ENCODE measurements at regions of chrX and their contacts with region 1.

Region 1: GRCh38 chrX:73577368-73577767 is 14.4 kb downstream of the CHIC1 start:
- DNase-seq: no peak
- ATAC-seq: no peak
- H3K4me3 ChIP-seq: no peak overlapping the region
- H3K4me3 Mint-ChIP-seq: no peak overlapping the region
- H3K27ac ChIP-seq: no peak overlapping the region
- H3K27ac Mint-ChIP-seq: no peak overlapping the region
- H3K4me1 ChIP-seq: no peaks in the 10 kb centered on the region
- H3K4me1 Mint-ChIP-seq: peaks cover 48% of the 10 kb centered on the region
- H3K27me3 ChIP-seq: no peaks in the 10 kb centered on the region
- H3K27me3 Mint-ChIP-seq: no peaks in the 10 kb centered on the region
- CTCF ChIP-seq: no peak

Region 2: GRCh38 chrX:73214426-73215094 is 362.8 kb before region 1 on chrX and contains the start of gene NAP1L2:
- CTCF ChIA-PET with region 1: no interaction called
- POLR2A ChIA-PET with region 1: no interaction called
- intact Hi-C with region 1: loop called in 1 of 2 experiments (anchors 10 kb)
- DNase-seq: peak in 8 of 9 experiments; percentile 6 to 81 (median 42)
- ATAC-seq: peak; percentile 87
- H3K4me3 ChIP-seq: peak within 1 kb of the TSS; percentile 55
- H3K4me3 Mint-ChIP-seq: peak within 1 kb of the TSS; percentile 91
- H3K27ac ChIP-seq: peak within 1 kb of the TSS; percentile 74 to 76
- H3K27ac Mint-ChIP-seq: peak within 1 kb of the TSS; percentile 91
- H3K4me1 ChIP-seq: peaks cover 13% of the 10 kb centered on the region
- H3K4me1 Mint-ChIP-seq: peaks cover 14% of the 10 kb centered on the region
- H3K27me3 ChIP-seq: no peaks in the 10 kb centered on the region
- H3K27me3 Mint-ChIP-seq: peaks cover 3% of the 10 kb centered on the region
- CTCF ChIP-seq: no peak
- total RNA-seq, gene NAP1L2: 2.6 to 2.7 TPM

Region 3: DNA sequence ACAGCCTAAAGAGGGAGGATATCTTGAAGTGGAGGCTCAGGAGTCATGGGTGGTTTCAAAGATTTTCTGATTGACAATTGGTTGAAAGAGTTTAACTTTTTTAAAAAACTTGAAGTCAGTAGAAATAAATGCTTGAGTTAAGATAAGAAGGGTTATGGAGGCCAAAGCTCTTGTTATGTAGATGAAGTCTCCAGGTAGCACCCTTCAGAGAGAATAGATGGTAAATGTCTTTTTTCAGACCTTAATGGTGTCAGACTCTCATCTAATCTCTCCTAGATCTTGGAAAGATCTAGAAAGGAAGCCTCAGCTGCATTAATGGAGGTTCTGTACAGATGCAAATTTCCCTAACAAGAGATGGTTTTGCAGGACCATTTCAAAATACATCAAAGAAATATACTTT is 21.2 kb before region 1 on chrX:
- CTCF ChIA-PET with region 1: interaction called, 3 read pairs
- POLR2A ChIA-PET with region 1: no interaction called
- intact Hi-C with region 1: loop called in 1 of 2 experiments (anchors 2 kb)
- DNase-seq: no peak
- ATAC-seq: no peak
- H3K4me3 ChIP-seq: no peak overlapping the region
- H3K4me3 Mint-ChIP-seq: no peak overlapping the region
- H3K27ac ChIP-seq: no peak overlapping the region
- H3K27ac Mint-ChIP-seq: no peak overlapping the region
- H3K4me1 ChIP-seq: no peaks in the 10 kb centered on the region
- H3K4me1 Mint-ChIP-seq: peaks cover 7% of the 10 kb centered on the region
- H3K27me3 ChIP-seq: no peaks in the 10 kb centered on the region
- H3K27me3 Mint-ChIP-seq: no peaks in the 10 kb centered on the region
- CTCF ChIP-seq: no peak

Measured in CD8-positive, alpha-beta T cell (primary cell).